Right ventricle myocardium inferior (tissue), 1 donor: ENCODE measurements at regions of chr19 and their contacts with region 1.

Region 1: DNA sequence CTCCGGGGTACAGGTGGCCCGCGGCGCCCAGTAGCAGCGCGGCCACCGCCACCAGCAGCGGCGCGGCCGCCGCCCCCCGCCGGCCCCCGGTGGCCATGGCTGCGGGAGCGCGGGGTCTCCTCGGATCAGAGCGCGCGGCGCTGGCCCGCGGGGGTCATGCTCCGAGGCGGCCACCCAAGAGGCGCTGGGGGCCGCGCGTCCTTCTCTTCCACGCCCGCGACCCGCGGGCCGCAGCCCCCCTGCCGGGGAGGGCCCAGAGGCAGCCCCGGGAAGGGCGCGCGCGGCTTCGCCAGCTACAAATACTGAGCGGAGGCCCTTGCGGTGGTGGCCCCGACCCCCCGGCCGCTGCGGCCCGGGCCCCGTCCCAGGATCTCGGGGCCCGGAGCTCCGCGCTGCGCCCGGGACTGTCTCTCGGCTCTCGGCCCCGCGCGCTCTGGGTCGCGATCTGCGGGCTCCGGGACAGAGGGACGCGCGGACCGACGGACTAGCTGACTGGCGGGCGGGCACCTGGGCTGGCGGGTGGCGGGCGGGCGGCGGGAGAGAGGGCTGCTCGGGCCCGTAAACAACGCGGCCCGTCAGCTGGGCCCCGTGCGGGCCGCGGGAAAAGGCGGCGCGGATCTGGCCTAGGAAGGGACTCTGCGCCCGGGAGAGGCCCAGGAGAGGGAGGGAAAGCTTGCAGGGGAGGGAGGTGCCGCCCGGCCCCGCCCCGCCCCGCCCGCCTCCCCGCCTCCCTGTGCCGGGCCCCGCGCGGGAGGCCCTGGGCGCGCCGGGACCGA is at the start of gene INSR:
- DNase-seq: peak; percentile 93
- ATAC-seq: peak; percentile 98
- total RNA-seq, gene INSR: 73.5 TPM

Region 2: GRCh38 chr19:7149956-7150705 is 143.9 kb before region 1 on chr19:
- intact Hi-C with region 1: loop called (anchors 2 kb)
- DNase-seq: no peak
- ATAC-seq: no peak

Region 3: GRCh38 chr19:7197760-7198696 is 96.0 kb before region 1 on chr19:
- intact Hi-C with region 1: loop called (anchors 1 kb)
- DNase-seq: peak; percentile 96
- ATAC-seq: peak; percentile 94

Region 4: GRCh38 chr19:7242601-7243258 is 51.3 kb before region 1 on chr19:
- intact Hi-C with region 1: no loop called
- DNase-seq: no peak
- ATAC-seq: peak; percentile 61

Region 5: GRCh38 chr19:7272856-7273578 is 21.0 kb before region 1 on chr19:
- intact Hi-C with region 1: no loop called
- DNase-seq: no peak
- ATAC-seq: no peak